Activated CD4-positive, alpha-beta memory T cell treated with anti-CD3 and anti-CD28 coated beads for 36 hours (primary cell): ENCODE measurements at regions of chr16 and their contacts with region 1.

Region 1: DNA sequence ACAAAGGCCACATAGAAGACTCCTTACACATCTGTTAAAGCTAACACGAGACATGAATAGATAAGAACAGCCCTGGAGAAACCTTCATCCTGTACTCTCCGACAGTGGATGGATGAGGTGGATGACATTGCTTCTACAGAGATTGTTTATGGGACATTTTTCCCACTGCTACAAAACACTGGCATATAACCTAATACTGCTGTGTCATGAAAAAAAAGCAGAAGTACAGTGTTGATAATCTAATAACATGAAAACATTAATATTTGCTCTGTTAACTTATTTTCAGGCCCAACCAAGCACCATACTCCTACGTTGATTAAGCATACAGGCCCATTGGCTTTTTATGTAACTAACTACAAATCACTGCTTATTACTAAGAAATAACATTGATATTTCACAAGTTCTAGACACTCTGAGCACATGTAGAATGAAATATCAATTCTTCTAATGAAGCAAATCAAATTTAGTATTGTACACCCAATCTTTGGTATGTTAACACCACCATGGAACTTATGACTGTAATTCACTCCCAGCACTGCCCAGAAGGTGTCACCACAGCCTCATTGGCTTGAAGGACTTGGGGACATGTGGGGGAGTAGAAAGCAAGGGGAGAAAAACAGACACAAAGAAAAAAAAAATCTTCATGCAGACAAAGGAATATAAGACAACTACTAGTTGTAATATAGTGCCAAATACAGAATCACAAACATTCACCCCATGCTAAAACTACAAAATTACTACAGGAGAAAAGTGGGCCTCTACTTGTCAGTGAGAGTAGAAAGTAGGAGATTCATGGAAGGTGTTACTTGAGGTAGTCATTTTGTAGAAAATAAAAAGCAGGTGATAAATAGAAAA is 330.0 kb upstream of the PMFBP1 start:
- DNase-seq: peak; percentile 57
- H3K4me3 Mint-ChIP-seq: no peak overlapping the region
- H3K27ac Mint-ChIP-seq: no peak overlapping the region
- H3K4me1 Mint-ChIP-seq: no peaks in the 10 kb centered on the region
- H3K27me3 Mint-ChIP-seq: no peaks in the 10 kb centered on the region

Region 2: DNA sequence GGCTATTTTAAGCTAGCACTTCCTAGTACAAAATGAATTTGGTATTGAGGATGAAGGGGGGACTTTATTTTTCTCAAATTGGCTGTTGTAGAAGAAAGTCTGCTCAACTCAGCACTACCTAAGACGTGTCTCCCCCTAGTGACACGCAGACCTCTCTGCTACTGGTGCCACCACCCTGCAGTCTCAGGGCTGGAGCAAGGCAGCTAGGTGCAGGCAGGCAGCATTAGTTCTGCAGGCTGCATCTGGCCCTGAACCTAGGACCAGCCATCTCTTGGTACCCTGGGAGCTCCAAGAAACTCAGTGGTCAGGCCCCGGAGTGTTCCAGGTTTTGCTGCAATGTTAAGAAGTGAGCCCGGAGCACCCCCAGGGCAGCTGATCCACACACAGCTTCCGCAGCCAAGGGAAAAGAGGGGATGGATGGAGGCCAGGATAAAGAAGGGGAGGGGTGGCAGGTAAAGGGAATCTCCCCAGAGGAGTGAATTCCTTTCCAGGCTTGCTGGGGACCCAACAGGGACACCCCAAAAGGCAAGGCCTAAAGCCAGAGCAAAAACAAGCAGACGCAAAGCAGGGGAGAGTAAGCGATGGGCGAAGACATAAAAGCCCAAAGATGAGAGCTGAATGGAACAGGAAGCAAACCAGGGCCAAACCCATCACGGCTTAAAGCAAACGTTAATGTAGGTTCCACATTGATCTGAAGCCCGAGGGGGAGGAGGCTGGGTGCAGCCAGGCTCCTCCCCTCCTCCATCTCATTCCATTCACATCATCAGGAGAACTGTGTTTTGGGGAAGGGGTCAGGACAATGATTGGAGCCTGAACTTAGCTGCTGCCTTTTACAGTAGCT is 345.4 kb after region 1 on chr16:
- CTCF ChIA-PET with region 1: no interaction called
- POLR2A ChIA-PET with region 1: no interaction called
- intact Hi-C with region 1: loop called (anchors 5 kb)
- DNase-seq: no peak
- H3K4me3 Mint-ChIP-seq: no peak overlapping the region
- H3K27ac Mint-ChIP-seq: no peak overlapping the region
- H3K4me1 Mint-ChIP-seq: no peaks in the 10 kb centered on the region
- H3K27me3 Mint-ChIP-seq: peaks cover 4% of the 10 kb centered on the region

Region 3: DNA sequence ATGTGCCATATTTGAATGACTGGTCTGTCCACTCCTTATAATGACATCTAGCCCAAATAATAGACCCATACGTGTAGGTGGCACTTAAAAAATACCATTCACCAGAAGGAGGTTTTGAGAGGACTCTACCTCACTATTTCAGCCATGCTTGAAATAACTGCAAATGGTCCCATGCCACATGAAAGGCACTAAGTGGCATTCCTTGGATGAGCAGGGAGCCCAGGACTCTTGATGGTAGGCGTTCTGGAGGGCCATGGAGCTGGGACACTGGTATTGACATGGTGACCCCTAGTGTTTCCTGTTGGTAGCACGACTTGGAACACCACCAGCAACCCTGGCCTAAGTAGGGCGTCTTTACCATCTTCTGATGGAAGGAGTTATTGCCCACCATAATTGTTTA is 694.7 kb after region 1 on chr16:
- CTCF ChIA-PET with region 1: no interaction called
- POLR2A ChIA-PET with region 1: no interaction called
- intact Hi-C with region 1: loop called (anchors 5 kb)
- DNase-seq: peak; percentile 9
- H3K4me3 Mint-ChIP-seq: no peak overlapping the region
- H3K27ac Mint-ChIP-seq: no peak overlapping the region
- H3K4me1 Mint-ChIP-seq: no peaks in the 10 kb centered on the region
- H3K27me3 Mint-ChIP-seq: no peaks in the 10 kb centered on the region